ENCODE measurements at regions of chr1 and their contacts with region 1.

Region 1: DNA sequence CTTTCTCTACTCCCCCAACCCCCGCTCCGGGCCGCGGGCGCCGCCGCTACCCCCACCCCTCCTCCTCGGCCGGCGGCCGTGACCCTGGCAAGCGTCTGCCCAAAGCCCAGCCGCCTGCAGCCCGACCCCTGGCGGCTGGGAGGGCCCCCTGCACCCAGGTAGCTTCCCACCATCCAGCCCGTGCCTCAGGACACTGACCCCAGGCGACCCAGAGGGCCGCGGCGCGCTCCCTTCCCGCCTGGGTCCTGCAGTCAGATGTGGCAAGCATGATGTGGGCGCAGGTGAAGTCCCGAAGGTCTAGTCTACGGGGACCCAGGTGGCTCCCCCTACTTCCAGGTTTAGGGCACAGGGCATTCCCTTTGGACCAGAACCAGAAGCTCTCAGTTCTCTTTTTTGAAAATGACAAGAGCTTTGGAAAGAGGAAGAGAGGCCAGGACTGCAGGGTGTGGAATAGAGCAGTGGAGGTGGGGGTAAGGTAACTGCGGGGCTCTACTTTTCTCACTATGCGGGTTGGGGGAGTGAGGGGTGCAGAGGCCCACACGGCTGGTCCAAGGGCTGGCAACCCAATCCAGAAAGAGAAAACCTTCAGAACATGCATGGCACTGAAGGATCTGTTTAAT is at the start of gene DENND4B:
- DNase-seq: peak; percentile 69 to 79 (median 74)
- H3K4me3 ChIP-seq: peak within 1 kb of the TSS; percentile 47 to 72
- H3K4me3 Mint-ChIP-seq: peak within 1 kb of the TSS; percentile 89 to 99 (median 96)
- H3K27ac ChIP-seq: peak within 1 kb of the TSS; percentile 83
- H3K27ac Mint-ChIP-seq: peak within 1 kb of the TSS; percentile 96 to 98 (median 98)
- H3K4me1 ChIP-seq: peaks cover 35% of the 10 kb centered on the region
- H3K4me1 Mint-ChIP-seq: peaks cover 18 to 45% (median 30%) of the 10 kb centered on the region in 4 donors
- H3K27me3 ChIP-seq: no peaks in the 10 kb centered on the region
- H3K27me3 Mint-ChIP-seq: peaks cover 0 to 4% of the 10 kb centered on the region in 2 donors
- total RNA-seq, gene DENND4B: 211 to 216 TPM

Region 2: GRCh38 chr1:153783233-153784190 is 163.2 kb before region 1 on chr1:
- CTCF ChIA-PET with region 1: no interaction called
- POLR2A ChIA-PET with region 1: interaction called, 13 read pairs
- intact Hi-C with region 1: no loop called
- DNase-seq: peak; percentile 89 to 94 (median 92)
- H3K4me3 ChIP-seq: peak overlapping the region; percentile 55 to 73
- H3K4me3 Mint-ChIP-seq: peak overlapping the region; percentile 88 to 97 (median 92)
- H3K27ac ChIP-seq: peak overlapping the region; percentile 84
- H3K27ac Mint-ChIP-seq: peak overlapping the region; percentile 89 to 99 (median 98)
- H3K4me1 ChIP-seq: peaks cover 6% of the 10 kb centered on the region
- H3K4me1 Mint-ChIP-seq: peaks cover 4 to 12% (median 11%) of the 10 kb centered on the region in 4 donors
- H3K27me3 ChIP-seq: no peaks in the 10 kb centered on the region
- H3K27me3 Mint-ChIP-seq: peaks cover 0 to 2% of the 10 kb centered on the region in 2 donors

Region 3: GRCh38 chr1:153816283-153816889 is 130.3 kb before region 1 on chr1:
- CTCF ChIA-PET with region 1: interaction called, 12 read pairs
- POLR2A ChIA-PET with region 1: interaction called, 3 read pairs
- intact Hi-C with region 1: loop called (anchors 1 kb)
- DNase-seq: no peak
- H3K4me3 ChIP-seq: no peak overlapping the region
- H3K4me3 Mint-ChIP-seq: no peak overlapping the region
- H3K27ac ChIP-seq: no peak overlapping the region
- H3K27ac Mint-ChIP-seq: peak overlapping the region in 2 of 7 donors; percentile 48 to 73
- H3K4me1 ChIP-seq: no peaks in the 10 kb centered on the region
- H3K4me1 Mint-ChIP-seq: peaks cover 0 to 4% (median under 1%) of the 10 kb centered on the region in 4 donors
- H3K27me3 ChIP-seq: no peaks in the 10 kb centered on the region
- H3K27me3 Mint-ChIP-seq: no peaks in the 10 kb centered on the region

Region 4: DNA sequence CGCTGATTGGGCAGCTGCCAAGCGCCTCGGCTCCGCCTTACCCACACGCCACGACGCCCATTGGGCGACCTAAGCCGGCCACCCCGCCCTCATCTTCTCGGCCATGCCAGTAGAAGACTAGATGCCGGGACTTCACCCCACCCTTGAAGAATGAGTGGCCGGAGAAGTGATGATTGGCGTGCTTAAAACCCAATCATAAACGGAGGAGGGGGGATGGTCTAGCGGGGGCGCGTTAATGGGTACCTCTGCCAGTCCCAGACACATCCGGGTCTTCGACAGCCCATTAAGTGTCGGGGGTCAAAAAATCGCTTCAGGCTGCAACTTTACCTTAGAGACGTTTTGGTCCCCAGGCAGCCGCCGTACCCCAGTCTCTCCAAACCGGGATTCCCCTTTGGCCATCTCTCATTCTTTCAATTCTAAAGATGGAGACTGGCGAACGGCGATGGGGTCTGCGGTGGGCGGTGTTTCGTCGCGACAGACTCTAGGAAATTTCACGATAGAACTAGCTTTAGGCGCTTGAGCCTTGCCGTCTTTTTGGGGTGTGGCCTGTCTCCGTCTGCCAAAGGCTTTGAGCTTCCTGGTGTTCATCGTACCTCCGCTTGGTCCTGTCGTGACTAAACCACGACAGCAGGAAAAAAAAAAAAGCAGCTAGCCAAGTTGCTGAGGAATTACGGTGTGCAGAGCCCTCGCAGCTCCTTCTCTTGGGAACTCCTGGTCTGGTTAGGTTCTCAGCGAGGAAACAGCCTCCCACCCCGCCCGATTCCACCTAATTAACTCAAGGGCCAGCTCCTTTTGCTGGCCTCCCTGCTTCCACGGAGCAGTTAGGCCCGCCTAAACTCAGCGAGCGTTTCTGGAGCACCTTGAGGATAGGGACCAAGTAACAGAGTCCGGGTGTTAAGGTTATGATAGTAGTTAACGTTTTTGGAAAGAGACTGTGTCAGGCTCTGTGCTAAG is 23.5 kb before region 1 on chr1 and contains the start of gene GATAD2B:
- CTCF ChIA-PET with region 1: interaction called, 69 read pairs
- POLR2A ChIA-PET with region 1: interaction called, 298 read pairs
- intact Hi-C with region 1: loop called (anchors 1 kb)
- DNase-seq: peak; percentile 99 to 100 (median 100)
- H3K4me3 ChIP-seq: peak within 1 kb of the TSS; percentile 80 to 99
- H3K4me3 Mint-ChIP-seq: peak within 1 kb of the TSS; percentile 94 to 97 (median 95)
- H3K27ac ChIP-seq: peak within 1 kb of the TSS; percentile 97
- H3K27ac Mint-ChIP-seq: peak within 1 kb of the TSS; percentile 96 to 99 (median 97)
- H3K4me1 ChIP-seq: peaks cover 44% of the 10 kb centered on the region
- H3K4me1 Mint-ChIP-seq: peaks cover 34 to 55% (median 43%) of the 10 kb centered on the region in 4 donors
- H3K27me3 ChIP-seq: no peaks in the 10 kb centered on the region
- H3K27me3 Mint-ChIP-seq: no peaks in the 10 kb centered on the region
- total RNA-seq, gene GATAD2B: 97.0 to 104 TPM

Region 5: DNA sequence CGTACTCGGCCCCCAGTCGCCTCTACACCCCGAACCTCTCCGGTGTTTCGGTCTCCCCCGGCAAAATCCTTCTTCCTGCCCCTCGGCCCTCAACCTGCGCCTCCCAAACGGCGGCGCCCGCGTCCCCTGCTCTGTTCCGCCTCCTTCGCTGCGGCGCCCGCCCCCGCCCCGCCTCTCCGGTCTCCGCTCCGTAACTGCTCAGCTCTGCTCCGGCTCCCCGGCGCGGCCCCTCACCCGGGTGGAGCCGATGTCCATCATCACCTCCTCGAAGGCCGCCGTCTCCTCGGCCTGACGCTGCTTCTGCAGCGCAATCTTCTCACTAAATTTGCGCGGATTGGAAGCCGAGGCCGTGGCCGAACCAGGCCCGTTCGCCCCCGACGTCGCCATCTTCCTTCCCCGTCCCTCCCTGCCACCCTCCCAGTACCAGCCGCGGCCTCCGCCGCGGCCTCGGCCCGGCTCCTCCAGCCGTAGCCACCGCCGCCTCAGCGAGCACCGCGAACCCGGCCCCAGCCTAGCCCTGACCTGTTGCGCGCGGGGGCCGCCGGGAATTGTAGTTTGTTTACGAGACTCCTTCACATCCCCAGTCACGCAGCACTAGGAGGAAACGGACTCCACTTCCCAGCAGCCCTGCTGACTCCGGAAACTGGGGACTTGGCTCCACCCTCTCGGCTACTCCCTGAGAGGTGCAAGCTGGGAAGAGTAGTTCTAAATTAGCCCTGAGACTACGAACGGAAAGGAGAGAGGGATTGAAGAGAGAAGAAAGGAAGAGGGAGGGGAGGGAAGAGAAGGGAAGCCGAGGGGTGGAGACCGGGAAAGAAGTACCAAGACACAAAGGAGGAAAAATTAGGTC is 11.6 kb after region 1 on chr1 and contains the start of gene CRTC2:
- CTCF ChIA-PET with region 1: interaction called, 31 read pairs
- POLR2A ChIA-PET with region 1: interaction called, 142 read pairs
- intact Hi-C with region 1: loop called (anchors 1 kb)
- DNase-seq: peak; percentile 95 to 99 (median 97)
- H3K4me3 ChIP-seq: peak within 1 kb of the TSS; percentile 80 to 99
- H3K4me3 Mint-ChIP-seq: peak within 1 kb of the TSS; percentile 97 to 99 (median 99)
- H3K27ac ChIP-seq: peak within 1 kb of the TSS; percentile 90
- H3K27ac Mint-ChIP-seq: peak within 1 kb of the TSS; percentile 88 to 99 (median 97)
- H3K4me1 ChIP-seq: peaks cover 61% of the 10 kb centered on the region
- H3K4me1 Mint-ChIP-seq: peaks cover 42 to 75% (median 57%) of the 10 kb centered on the region in 4 donors
- H3K27me3 ChIP-seq: no peaks in the 10 kb centered on the region
- H3K27me3 Mint-ChIP-seq: no peaks in the 10 kb centered on the region
- total RNA-seq, gene CRTC2: 112 to 113 TPM

Region 6: GRCh38 chr1:153977250-153978240 is 30.8 kb after region 1 on chr1 and contains the start of gene JTB:
- CTCF ChIA-PET with region 1: interaction called, 25 read pairs
- POLR2A ChIA-PET with region 1: interaction called, 83 read pairs
- intact Hi-C with region 1: loop called (anchors 1 kb)
- DNase-seq: peak; percentile 77 to 91 (median 79)
- H3K4me3 ChIP-seq: peak within 1 kb of the TSS; percentile 94
- H3K4me3 Mint-ChIP-seq: peak within 1 kb of the TSS; percentile 93 to 98 (median 97)
- H3K27ac ChIP-seq: peak within 1 kb of the TSS; percentile 92
- H3K27ac Mint-ChIP-seq: peak within 1 kb of the TSS; percentile 96 to 98 (median 97)
- H3K4me1 ChIP-seq: peaks cover 25% of the 10 kb centered on the region
- H3K4me1 Mint-ChIP-seq: peaks cover 15 to 54% (median 29%) of the 10 kb centered on the region in 4 donors
- H3K27me3 ChIP-seq: no peaks in the 10 kb centered on the region
- H3K27me3 Mint-ChIP-seq: no peaks in the 10 kb centered on the region
- total RNA-seq, gene JTB: 121 to 130 TPM